Posterior vena cava (tissue), 2 donors: ENCODE measurements at regions of chr3 and their contacts with region 1.

Region 1: DNA sequence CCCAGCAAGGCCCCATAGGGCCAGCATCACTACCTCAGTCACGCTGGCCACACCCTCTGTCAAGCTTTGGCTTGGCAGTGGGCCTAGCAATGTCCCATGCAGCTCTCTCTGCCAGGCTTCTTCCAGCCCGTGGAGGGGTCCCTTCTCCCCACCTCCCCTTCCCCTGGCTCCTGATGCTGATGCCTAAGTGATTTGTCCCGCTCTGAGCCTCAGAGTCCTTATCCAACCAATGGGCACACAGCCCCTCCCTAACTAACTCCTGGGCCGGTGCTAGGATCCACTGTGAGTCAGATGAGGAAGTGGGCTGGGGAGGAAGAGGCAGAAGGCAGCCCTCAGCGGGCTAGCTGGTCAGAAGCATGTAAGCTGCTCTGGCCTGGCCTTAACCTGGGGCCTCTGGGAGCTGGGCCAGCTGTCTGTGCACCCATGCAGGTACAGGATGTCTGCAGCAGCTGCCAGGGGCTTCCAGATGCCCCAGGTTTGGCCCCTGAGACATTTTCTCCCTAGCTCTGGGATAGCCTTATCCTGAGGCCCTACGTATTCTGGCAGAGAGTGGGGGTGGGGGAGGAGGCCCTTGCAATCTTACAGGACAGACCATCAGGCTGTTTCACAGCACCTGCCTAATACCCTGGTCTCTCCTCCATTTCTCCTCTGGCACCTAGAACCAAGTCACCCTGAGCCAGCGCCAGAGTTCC is 740 bp upstream of the ZBTB47 start:
- DNase-seq: peak; percentile 92

Region 2: DNA sequence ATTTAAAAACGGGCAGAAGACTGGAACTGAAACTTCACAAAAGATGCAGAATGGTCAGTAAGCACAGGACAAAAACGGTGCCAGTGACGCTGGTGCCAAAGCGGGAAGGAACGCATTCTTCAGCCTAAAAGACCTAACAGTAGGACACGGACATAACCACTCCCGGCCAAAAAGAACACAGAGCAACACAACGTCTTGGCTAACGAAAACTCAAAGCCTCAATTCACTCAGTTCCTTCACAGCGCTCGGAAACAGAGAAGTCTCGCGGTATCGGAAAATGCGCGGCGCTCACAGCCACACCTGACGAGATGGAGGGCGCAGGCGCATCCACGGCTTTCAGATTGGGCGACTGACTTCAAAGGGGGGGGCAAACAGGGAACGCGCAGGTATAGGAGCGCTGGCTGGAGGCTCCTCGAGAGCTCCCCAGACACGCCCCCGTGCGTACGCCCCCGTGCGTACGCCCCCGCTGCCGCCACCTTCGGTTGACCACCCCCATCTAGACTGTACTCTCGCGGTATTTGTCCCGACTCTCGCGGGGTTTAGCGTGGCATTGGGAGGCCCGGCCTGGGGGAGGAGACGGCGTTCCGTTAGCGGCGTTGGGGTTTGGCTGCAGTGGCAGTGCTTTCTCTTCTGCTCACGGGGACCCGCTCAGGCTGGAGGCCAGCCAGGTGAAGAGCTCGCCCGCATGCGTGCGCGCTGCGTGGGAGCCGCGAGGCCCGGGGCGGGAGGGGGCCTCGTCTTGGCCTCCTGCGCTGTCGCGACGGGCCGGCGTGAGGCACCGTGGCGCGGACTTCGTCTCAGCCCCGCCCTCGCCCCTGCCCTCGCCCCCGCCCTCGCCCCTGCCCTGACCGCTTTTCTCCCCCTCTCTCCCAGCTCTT is 52.4 kb before region 1 on chr3 and contains the start of gene NKTR:
- intact Hi-C with region 1: loop called in 1 of 2 experiments (anchors 10 kb)
- DNase-seq: peak; percentile 99
- total RNA-seq, gene NKTR: 75.2 to 78.0 TPM

Region 3: GRCh38 chr3:42739401-42740158 is 86.8 kb after region 1 on chr3:
- intact Hi-C with region 1: loop called in 1 of 2 experiments (anchors 5 kb)
- DNase-seq: no peak